ENCODE measurements at regions of chr7 and their contacts with region 1.

Region 1: DNA sequence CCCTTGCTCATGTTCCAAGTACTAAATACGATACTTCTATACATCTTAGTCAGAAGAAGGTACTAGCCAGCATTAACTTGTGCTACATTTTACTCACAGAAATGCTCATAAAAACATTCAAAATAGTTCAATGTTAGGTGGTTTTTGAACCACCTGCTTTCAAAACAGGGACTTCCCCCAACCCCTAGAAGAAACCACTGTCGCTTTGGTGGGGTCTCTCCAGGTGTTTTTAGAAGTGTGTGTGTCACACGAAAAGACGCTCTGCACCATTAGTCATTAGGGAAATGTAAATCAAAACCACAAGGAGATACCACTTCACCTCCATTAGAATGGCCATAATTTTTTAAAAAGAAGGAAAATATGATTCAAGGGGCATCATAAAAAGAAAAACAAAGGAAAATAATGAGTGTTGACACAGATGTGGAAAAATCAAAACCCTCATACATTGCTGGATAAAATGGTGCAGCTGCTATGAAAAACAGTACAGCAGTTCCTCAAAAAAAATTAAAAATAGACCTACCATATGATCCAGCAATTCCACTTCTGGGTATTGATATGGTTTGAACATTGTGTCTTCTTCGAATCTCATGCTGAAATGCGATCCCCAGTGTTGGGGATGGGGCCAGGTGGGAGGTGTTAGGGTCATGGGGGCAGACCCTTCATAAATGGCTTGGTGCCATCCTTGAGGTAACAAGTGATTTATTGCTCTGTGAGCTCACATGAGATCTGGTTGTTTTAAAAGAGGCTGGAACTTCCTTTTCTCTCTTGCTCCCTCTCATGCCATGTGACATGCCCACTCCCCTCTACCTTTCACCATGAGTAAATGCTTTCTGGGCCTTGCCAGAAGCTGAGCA is 74.2 kb downstream of the MALSU1 start:
- DNase-seq: peak; percentile 80
- H3K4me3 Mint-ChIP-seq: peak overlapping the region; percentile 17
- H3K27ac Mint-ChIP-seq: peak overlapping the region; percentile 76
- H3K4me1 Mint-ChIP-seq: peaks cover 46% of the 10 kb centered on the region
- H3K27me3 Mint-ChIP-seq: peaks cover 15% of the 10 kb centered on the region

Region 2: DNA sequence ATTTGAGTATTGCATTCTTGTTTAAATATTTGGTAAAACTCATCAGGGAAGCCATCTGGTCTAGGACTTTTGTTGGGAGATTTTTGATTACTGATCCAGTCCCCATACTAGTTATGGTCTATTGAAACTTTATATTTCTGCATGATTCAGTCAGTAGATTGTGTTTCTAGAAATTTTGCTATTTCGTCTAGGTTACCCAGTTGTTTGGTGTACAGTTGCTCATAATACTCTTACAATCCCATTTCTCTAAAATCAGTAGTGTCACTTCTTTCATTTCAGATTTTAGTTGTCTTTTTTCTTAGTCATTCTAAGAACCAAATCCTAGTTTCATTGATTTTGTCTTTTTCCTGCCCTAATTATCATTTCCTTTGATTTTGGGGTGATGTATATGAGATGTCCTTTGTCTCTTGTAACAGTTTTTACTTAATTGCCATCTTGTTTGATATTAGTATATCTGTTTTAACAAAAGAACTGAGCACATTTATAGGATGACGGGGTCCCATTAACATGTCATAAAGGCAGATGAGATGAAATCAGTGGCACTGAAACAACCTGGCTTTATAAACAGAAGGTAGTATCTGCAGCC is 66.3 kb before region 1 on chr7:
- CTCF ChIA-PET with region 1: interaction called, 3 read pairs
- POLR2A ChIA-PET with region 1: no interaction called
- intact Hi-C with region 1: loop called (anchors 1 kb)
- DNase-seq: no peak
- H3K4me3 Mint-ChIP-seq: no peak overlapping the region
- H3K27ac Mint-ChIP-seq: peak overlapping the region; percentile 55
- H3K4me1 Mint-ChIP-seq: peaks cover 45% of the 10 kb centered on the region
- H3K27me3 Mint-ChIP-seq: no peaks in the 10 kb centered on the region

Region 3: DNA sequence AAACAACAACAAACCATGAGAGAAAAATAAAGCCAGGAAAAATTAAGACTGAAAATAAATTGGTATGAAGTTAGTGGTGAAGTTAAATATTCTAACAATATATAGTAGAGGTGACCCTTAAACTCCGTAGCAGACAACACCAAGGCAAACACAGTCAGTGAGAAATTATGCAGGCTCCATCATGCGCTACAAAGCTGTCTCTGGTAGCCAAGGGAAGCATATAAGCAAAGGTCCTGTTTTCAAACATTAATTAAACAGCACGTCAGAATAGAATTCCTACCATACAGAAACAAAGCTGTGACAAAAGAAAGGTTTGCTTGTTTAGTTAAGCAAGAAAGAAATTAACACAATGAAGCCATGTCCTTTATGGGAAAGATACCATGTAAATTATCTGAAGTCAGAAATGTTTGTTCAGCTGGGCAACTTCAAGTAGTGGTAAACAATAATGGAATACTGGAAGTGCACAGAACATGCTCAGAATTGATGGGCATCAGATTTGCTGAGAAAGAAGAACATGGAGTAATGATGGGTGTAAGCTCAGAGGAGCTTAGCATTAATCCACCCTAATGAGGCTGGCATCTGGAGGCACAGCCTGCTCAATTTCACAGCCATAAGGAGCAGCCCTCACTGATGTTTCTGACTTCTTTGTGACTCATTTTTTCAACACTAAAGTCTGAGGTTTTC is 21.3 kb after region 1 on chr7:
- CTCF ChIA-PET with region 1: no interaction called
- POLR2A ChIA-PET with region 1: interaction called, 8 read pairs
- intact Hi-C with region 1: loop called (anchors 1 kb)
- DNase-seq: no peak
- H3K4me3 Mint-ChIP-seq: no peak overlapping the region
- H3K27ac Mint-ChIP-seq: no peak overlapping the region
- H3K4me1 Mint-ChIP-seq: peaks cover 20% of the 10 kb centered on the region
- H3K27me3 Mint-ChIP-seq: peaks cover 7% of the 10 kb centered on the region

Region 4: GRCh38 chr7:23474094-23474828 is 100.9 kb after region 1 on chr7:
- CTCF ChIA-PET with region 1: no interaction called
- POLR2A ChIA-PET with region 1: no interaction called
- intact Hi-C with region 1: loop called (anchors 2 kb)
- DNase-seq: peak; percentile 91
- H3K4me3 Mint-ChIP-seq: peak overlapping the region; percentile 63
- H3K27ac Mint-ChIP-seq: peak overlapping the region; percentile 42
- H3K4me1 Mint-ChIP-seq: peaks cover 27% of the 10 kb centered on the region
- H3K27me3 Mint-ChIP-seq: peaks cover 60% of the 10 kb centered on the region

Measured in activated CD4-positive, alpha-beta memory T cell treated with anti-CD3 and anti-CD28 coated beads for 36 hours (primary cell).